Left cardiac atrium (tissue), 4 donors: ENCODE measurements at regions of chr19 and their contacts with region 1.

Region 1: DNA sequence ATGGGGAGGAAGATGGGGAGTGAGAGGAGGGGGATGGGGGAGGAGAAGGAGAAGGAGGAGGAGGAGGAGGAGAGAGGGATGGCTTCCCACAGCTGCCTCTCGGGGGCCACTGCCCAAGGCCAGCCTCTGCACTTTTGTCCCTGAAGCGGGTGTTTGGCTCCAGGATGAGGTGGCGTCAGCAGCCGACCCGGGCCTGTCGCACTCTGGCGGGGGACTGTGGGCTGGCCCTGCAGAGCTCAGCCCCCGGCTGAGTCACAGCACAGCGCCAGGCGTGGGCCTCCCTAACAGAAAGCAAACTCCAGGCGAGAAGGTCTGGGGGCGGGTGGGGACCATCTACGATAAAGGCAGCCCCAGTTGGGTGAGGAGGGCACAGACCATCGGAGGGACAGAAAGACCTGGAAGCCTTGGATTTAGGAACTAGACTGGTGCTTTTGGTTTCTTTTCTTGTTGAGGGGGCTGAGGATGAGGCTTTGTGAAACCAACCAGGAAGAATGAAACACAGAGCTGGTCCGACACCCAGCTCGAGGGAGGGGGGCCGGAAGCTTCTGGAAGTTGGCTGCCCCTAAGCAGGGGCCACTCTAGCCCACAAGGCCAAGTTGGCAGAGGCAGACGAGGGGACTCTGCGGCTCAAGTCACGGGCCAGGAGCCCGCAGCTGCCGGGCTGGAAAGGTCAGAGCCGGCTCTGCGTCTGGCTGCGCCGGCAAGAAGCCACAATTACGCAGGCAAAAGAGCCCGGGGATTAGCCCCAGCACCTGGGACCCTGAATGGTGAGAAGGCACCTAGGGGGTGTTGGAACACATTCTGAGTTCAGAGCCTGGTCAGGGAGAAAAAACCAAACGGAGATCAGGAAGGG is 18.2 kb downstream of the LSM4 start:
- DNase-seq: peak; percentile 93
- ATAC-seq: peak; percentile 84 to 89

Region 2: DNA sequence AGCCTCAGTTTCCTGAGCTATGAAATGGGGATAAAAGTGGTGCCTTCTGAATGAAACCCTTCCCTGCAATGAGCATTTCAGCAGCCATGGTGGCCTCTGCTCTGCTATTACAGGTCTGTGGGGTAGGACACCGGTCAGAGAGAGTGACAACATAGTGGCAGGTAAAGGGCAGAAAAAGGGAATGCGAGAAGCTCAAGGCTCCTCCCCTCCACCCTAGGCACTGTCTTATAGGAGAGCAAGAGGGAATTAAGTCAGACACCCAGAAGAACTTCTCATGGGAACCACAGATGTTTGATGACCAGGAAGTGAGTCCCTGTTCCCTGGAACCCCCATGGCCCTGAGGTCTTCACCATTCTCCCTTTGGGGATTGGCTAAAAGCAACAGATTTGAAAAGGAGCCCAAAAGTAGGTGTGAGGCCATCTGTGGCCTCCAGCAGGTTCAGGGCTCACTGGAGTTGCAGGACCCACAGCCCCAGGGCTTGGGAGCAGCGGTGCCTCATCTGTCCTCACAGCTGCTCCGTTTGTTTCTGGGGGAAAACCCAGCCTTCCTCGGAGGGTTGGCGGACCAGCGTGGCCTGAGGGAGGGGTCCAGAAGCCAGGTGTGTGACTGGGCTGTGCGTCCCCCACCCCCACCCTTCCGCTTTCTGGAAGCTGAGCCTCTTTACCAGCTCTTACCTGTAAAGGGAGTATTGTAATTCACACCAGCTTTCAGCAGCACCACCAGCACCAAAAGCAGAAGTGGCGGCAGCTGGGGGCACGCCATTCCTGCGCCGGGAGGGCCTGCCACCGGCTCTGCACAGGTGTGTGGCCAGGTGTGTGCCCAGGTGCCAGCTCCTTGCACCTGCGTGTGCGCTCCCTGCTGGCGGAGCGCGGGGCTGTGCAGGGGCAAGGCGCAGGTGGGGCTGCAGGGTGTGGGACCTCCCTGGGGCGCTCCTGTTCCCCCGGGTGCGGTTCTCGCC is 49.9 kb before region 1 on chr19:
- intact Hi-C with region 1: no loop called
- DNase-seq: no peak
- ATAC-seq: no peak

Region 3: GRCh38 chr19:18322759-18323460 is 18.2 kb after region 1 on chr19 and contains the start of gene LSM4:
- intact Hi-C with region 1: loop called in 1 of 2 experiments (anchors 2 kb)
- DNase-seq: peak; percentile 98
- ATAC-seq: peak; percentile 98
- total RNA-seq, gene LSM4: 68.9 to 79.0 TPM